Vagina (tissue), 2 donors: ENCODE measurements at regions of chr12 and their contacts with region 1.

Region 1: DNA sequence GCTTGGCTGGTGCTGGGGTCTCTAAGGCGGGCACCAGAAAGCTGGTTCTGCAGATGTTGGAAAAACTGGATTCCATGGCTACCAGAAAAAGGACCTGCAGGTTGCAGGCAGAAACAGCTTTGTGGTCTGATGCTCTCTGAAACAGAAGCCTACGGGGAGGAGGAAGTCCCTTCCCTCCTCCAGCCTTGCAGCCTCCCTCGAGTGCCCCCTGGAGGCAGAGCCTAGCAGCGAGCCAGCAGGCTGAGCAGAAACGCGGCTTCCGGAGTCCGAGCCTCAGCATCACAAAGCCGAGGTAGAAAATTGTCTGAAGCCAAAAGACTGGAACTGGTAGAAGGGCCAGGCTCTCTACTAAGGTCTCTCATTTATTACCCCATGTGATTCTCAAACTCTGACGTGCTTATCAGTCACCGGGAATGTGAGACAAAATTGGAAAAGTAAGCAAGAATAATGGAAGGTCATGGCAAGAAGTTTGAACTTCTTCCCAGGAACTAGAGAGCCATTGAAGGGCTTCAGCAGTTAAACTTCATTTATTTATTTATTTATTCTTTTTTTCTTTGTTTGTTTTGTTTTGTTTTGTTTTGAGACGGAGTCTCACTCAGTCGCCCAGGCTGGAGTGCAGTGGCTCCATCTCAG is 82.2 kb upstream of the CPSF6 start:
- DNase-seq: no peak
- H3K4me3 ChIP-seq: no peak overlapping the region
- H3K27ac ChIP-seq: no peak overlapping the region
- H3K4me1 ChIP-seq: peaks cover 5% of the 10 kb centered on the region
- H3K27me3 ChIP-seq: no peaks in the 10 kb centered on the region
- CTCF ChIP-seq: peak in 2 of 3 experiments; percentile 49 to 58
- POLR2A ChIP-seq: no peak

Region 2: GRCh38 chr12:69266036-69266635 is 109.0 kb after region 1 on chr12:
- intact Hi-C with region 1: loop called (anchors 10 kb)
- DNase-seq: no peak
- H3K4me3 ChIP-seq: no peak overlapping the region
- H3K27ac ChIP-seq: no peak overlapping the region
- H3K4me1 ChIP-seq: no peaks in the 10 kb centered on the region
- H3K27me3 ChIP-seq: no peaks in the 10 kb centered on the region
- CTCF ChIP-seq: no peak
- POLR2A ChIP-seq: no peak